AG04449 (cell line): ENCODE measurements at regions of chr9 and their contacts with region 1.

Region 1: DNA sequence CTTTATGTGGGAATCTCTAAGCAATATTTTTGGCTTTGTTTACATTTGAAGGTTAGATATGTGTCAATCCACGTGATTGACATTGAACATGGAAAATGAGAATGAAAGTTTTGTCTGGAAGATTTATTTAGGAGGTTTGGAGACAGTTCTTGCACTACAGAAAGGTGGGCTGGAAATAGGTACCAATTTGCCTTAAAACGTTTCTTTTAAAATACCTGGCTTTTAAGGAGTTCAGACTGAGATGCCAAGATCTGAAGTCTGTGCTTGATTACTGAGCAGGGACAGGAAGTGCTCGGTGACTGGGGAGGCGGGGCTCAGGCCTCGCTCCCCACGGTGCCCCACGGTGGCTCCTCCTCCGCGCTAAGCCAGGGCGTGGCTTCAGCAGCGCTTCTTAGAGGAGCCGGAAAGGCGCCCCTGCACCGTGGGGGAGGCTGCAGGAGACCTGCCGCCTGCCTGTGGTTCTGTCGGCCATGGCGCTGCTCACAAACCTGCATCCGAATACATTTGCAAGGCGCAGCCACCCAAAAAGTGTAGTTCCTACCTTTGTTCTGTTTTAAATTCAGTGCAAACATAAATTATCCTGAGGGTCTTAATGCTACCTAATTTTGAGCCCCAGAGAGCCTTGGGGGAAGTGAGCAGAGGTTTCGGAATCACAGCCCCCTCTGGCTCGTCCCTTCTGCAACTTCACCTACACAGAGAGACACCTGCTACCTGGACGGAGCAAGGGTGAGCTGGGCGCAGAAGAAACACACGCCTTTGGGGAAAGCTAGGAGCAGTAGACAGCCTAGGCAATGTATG is 49.2 kb downstream of the USP20 start:
- DNase-seq: no peak
- H3K4me3 ChIP-seq: peak overlapping the region; percentile 36
- CTCF ChIP-seq: no peak

Region 2: GRCh38 chr9:129898191-129898590 is 13.8 kb after region 1 on chr9:
- CTCF ChIA-PET with region 1: interaction called, 12 read pairs
- POLR2A ChIA-PET with region 1: no interaction called
- DNase-seq: no peak
- H3K4me3 ChIP-seq: no peak overlapping the region
- CTCF ChIP-seq: no peak

Region 3: GRCh38 chr9:129906298-129906697 is 21.9 kb after region 1 on chr9:
- CTCF ChIA-PET with region 1: interaction called, 10 read pairs
- POLR2A ChIA-PET with region 1: no interaction called
- DNase-seq: no peak
- H3K4me3 ChIP-seq: no peak overlapping the region
- CTCF ChIP-seq: no peak

Region 4: GRCh38 chr9:130042833-130043653 is 158.6 kb after region 1 on chr9 and contains the start of gene FNBP1:
- CTCF ChIA-PET with region 1: interaction called, 44 read pairs
- POLR2A ChIA-PET with region 1: interaction called, 9 read pairs
- DNase-seq: no peak
- H3K4me3 ChIP-seq: peak within 1 kb of the TSS; percentile 77
- CTCF ChIP-seq: no peak

Region 5: GRCh38 chr9:130053504-130054324 is 169.3 kb after region 1 on chr9 and contains the start of gene GPR107:
- CTCF ChIA-PET with region 1: interaction called, 13 read pairs
- POLR2A ChIA-PET with region 1: no interaction called
- DNase-seq: no peak
- H3K4me3 ChIP-seq: peak within 1 kb of the TSS; percentile 82
- CTCF ChIP-seq: no peak

Region 6: GRCh38 chr9:130101915-130102314 is 217.5 kb after region 1 on chr9:
- CTCF ChIA-PET with region 1: interaction called, 37 read pairs
- POLR2A ChIA-PET with region 1: no interaction called
- DNase-seq: no peak
- H3K4me3 ChIP-seq: no peak overlapping the region
- CTCF ChIP-seq: no peak